CD4-positive, alpha-beta memory T cell (primary cell): ENCODE measurements at regions of chr1 and their contacts with region 1.

Region 1: DNA sequence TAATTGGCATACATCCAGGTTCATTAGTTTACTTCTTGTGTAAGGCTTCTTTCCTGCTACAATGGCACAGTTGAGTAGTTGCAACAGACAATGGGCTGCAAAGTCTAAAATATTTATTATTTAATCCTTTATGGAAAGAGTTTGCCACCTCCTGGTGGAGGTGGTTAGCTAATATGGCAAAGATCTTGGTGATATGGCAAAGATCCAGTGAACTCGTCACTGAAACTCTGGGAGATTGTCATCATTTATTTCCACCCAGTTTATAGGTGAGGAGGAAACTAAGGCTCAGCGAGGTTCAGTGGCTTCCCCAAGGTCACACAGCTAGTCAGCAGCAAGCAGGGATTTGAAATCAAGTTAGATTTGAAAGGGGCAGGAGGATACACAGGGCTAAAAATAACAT is 16.1 kb upstream of the IFFO2 start:
- DNase-seq: peak; percentile 57 to 64 (median 61)
- H3K4me3 ChIP-seq: no peak overlapping the region
- H3K4me3 Mint-ChIP-seq: no peak overlapping the region
- H3K27ac ChIP-seq: no peak overlapping the region
- H3K27ac Mint-ChIP-seq: peak overlapping the region in 1 of 7 donors; percentile 74
- H3K4me1 ChIP-seq: no peaks in the 10 kb centered on the region
- H3K4me1 Mint-ChIP-seq: peaks cover 1 to 8% (median 3%) of the 10 kb centered on the region in 4 donors
- H3K27me3 ChIP-seq: no peaks in the 10 kb centered on the region
- H3K27me3 Mint-ChIP-seq: no peaks in the 10 kb centered on the region

Region 2: DNA sequence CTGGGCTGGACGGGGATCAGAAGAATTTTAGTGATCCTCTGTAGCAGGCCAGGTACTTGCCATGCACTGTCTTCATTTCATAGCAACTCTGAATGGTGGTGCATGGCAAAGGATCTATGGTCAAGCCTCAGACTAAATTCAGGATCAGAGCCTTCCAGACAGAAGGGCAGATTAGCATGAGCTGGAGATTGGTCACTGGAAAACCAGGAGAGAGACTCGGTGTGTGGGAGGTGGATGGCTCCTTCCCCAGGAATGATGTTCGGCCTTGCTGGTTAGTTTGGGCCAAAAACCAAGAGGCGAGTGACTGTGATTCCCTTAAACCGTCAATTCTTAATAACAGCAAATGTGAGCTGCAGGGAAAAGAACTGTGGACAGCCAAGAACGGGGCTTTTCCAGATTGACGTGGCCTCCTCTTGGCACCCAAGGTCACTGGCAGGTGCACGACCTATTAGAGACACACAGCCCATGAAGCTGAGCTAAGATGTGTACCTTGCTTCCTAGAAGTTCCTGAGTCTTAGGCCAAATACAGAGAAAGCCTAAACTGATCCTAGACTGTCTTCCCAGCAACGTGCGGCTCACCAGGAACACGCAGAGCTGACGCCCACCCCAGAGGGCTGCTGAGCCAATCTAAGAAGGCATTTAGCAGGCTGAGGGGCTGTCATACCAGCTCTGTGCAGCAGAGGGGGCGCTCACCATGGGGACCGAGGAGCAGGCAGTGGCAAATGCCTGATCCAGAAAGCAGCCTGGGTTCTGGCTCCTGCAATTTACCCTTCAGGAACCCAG is 88.7 kb before region 1 on chr1:
- CTCF ChIA-PET with region 1: interaction called, 102 read pairs
- POLR2A ChIA-PET with region 1: interaction called, 5 read pairs
- intact Hi-C with region 1: loop called (anchors 1 kb)
- DNase-seq: peak; percentile 55 to 68 (median 58)
- H3K4me3 ChIP-seq: no peak overlapping the region
- H3K4me3 Mint-ChIP-seq: no peak overlapping the region
- H3K27ac ChIP-seq: no peak overlapping the region
- H3K27ac Mint-ChIP-seq: peak overlapping the region in 1 of 7 donors; percentile 38
- H3K4me1 ChIP-seq: no peaks in the 10 kb centered on the region
- H3K4me1 Mint-ChIP-seq: peaks cover 0 to 5% (median 0%) of the 10 kb centered on the region in 4 donors
- H3K27me3 ChIP-seq: no peaks in the 10 kb centered on the region
- H3K27me3 Mint-ChIP-seq: no peaks in the 10 kb centered on the region

Region 3: GRCh38 chr1:18926315-18927081 is 46.0 kb before region 1 on chr1:
- CTCF ChIA-PET with region 1: interaction called, 27 read pairs
- POLR2A ChIA-PET with region 1: interaction called, 14 read pairs
- intact Hi-C with region 1: loop called (anchors 1 kb)
- DNase-seq: peak; percentile 75 to 95 (median 78)
- H3K4me3 ChIP-seq: peak overlapping the region; percentile 45 to 58
- H3K4me3 Mint-ChIP-seq: peak overlapping the region; percentile 78 to 89 (median 84)
- H3K27ac ChIP-seq: peak overlapping the region; percentile 75
- H3K27ac Mint-ChIP-seq: peak overlapping the region; percentile 87 to 99 (median 98)
- H3K4me1 ChIP-seq: peaks cover 99% of the 10 kb centered on the region
- H3K4me1 Mint-ChIP-seq: peaks cover 48 to 98% (median 83%) of the 10 kb centered on the region in 4 donors
- H3K27me3 ChIP-seq: no peaks in the 10 kb centered on the region
- H3K27me3 Mint-ChIP-seq: no peaks in the 10 kb centered on the region

Region 4: DNA sequence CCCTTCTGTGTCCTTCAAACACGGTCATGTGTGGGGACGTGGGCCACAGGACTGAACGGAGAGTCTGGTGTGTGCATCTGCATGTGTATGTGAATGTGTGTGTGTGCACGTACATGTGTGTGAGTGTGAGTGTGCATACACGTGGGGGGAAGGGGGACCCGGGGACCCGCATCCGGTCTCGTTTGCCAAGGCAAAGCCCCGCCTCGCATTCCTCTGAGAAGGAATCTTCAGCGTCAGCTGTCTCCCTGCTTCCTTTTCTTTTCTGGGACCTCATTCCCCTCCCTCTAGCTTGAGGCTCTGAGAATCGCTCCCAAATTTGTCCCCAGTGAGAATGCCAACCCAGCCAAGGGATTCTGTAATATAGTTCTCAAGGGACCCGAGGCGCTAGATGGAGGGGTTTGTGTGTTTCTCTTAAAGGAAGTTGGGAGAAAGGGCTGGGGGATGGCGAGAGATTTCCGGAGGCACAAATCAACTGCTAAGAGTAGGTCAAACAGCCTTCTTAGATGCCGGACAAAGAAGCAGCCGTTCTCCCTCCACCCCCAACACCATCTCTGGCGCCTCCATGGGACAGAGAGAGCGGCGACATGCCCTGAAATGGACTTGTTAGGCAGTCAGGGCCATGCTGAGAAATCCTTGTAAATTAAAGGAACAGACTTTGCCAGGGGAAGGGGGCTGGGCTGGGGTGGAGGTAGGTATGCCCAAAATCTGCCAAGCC is 22.7 kb before region 1 on chr1:
- CTCF ChIA-PET with region 1: interaction called, 19 read pairs
- POLR2A ChIA-PET with region 1: interaction called, 4 read pairs
- intact Hi-C with region 1: no loop called
- DNase-seq: no peak
- H3K4me3 ChIP-seq: peak overlapping the region; percentile 59 to 65
- H3K4me3 Mint-ChIP-seq: peak overlapping the region; percentile 91 to 98 (median 94)
- H3K27ac ChIP-seq: peak overlapping the region; percentile 98
- H3K27ac Mint-ChIP-seq: peak overlapping the region; percentile 98 to 100 (median 100)
- H3K4me1 ChIP-seq: peaks cover 100% of the 10 kb centered on the region
- H3K4me1 Mint-ChIP-seq: peaks cover 66 to 98% (median 87%) of the 10 kb centered on the region in 4 donors
- H3K27me3 ChIP-seq: no peaks in the 10 kb centered on the region
- H3K27me3 Mint-ChIP-seq: no peaks in the 10 kb centered on the region

Region 5: GRCh38 chr1:18962121-18962721 is 10.3 kb before region 1 on chr1:
- CTCF ChIA-PET with region 1: interaction called, 14 read pairs
- POLR2A ChIA-PET with region 1: interaction called, 5 read pairs
- intact Hi-C with region 1: no loop called
- DNase-seq: no peak
- H3K4me3 ChIP-seq: no peak overlapping the region
- H3K4me3 Mint-ChIP-seq: no peak overlapping the region
- H3K27ac ChIP-seq: no peak overlapping the region
- H3K27ac Mint-ChIP-seq: peak overlapping the region in 1 of 7 donors; percentile 9
- H3K4me1 ChIP-seq: peaks cover 14% of the 10 kb centered on the region
- H3K4me1 Mint-ChIP-seq: peaks cover 11 to 21% (median 15%) of the 10 kb centered on the region in 4 donors
- H3K27me3 ChIP-seq: no peaks in the 10 kb centered on the region
- H3K27me3 Mint-ChIP-seq: no peaks in the 10 kb centered on the region